ENCODE measurements at regions of chr14 and their contacts with region 1.

Region 1: GRCh38 chr14:51094901-51095853 is at the start of gene TRIM9:
- DNase-seq: peak; percentile 75 to 96 (median 91)
- ATAC-seq: peak; percentile 94
- H3K4me3 ChIP-seq: peak within 1 kb of the TSS; percentile 72 to 81
- H3K4me3 Mint-ChIP-seq: peak within 1 kb of the TSS; percentile 93
- H3K27ac ChIP-seq: peak within 1 kb of the TSS; percentile 26 to 52
- H3K27ac Mint-ChIP-seq: peak within 1 kb of the TSS; percentile 81
- H3K4me1 ChIP-seq: peaks cover 17% of the 10 kb centered on the region
- H3K4me1 Mint-ChIP-seq: peaks cover 18% of the 10 kb centered on the region
- H3K27me3 ChIP-seq: peaks cover 0 to 10% of the 10 kb centered on the region in 2 experiments
- H3K27me3 Mint-ChIP-seq: peaks cover 3% of the 10 kb centered on the region
- CTCF ChIP-seq: no peak
- total RNA-seq, gene TRIM9: 0.57 to 0.64 TPM

Region 2: DNA sequence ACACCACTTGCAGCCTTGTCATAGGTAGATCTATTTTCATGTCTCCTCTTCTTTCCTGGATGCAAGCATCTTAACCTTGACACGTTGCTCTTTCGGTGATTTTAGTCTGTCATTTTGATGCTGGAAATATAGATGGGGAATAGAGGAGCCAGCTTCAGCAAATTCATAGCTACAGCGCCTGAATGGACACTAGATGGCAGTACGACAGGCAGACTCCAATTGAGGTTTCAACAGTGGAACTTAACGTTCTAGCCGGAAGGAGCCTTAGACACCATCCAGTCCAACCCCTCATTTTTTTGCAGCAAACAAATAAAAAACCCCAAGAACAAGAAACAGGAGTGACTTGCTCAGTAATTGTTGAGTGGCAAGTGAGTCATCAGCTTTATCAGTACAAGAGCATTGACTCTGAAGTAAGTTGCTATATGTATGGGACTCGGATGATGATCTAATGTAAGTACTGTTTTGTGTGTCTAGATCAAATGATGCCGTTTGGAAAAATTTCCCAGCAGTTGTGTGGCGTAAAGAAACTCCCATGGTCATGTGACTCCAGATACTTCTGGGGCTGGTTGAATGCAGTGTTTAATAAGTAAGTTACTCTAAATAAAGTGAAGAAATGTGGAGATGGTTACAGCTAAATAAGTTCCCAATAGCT is 774.0 kb before region 1 on chr14:
- CTCF ChIA-PET with region 1: no interaction called
- POLR2A ChIA-PET with region 1: no interaction called
- intact Hi-C with region 1: loop called (anchors 5 kb)
- DNase-seq: peak; percentile 29 to 93 (median 68)
- ATAC-seq: peak; percentile 95
- H3K4me3 ChIP-seq: no peak overlapping the region
- H3K4me3 Mint-ChIP-seq: no peak overlapping the region
- H3K27ac ChIP-seq: peak overlapping the region; percentile 10 to 59
- H3K27ac Mint-ChIP-seq: no peak overlapping the region
- H3K4me1 ChIP-seq: peaks cover 7% of the 10 kb centered on the region
- H3K4me1 Mint-ChIP-seq: peaks cover 21% of the 10 kb centered on the region
- H3K27me3 ChIP-seq: no peaks in the 10 kb centered on the region
- H3K27me3 Mint-ChIP-seq: no peaks in the 10 kb centered on the region
- CTCF ChIP-seq: peak; percentile 88

Region 3: DNA sequence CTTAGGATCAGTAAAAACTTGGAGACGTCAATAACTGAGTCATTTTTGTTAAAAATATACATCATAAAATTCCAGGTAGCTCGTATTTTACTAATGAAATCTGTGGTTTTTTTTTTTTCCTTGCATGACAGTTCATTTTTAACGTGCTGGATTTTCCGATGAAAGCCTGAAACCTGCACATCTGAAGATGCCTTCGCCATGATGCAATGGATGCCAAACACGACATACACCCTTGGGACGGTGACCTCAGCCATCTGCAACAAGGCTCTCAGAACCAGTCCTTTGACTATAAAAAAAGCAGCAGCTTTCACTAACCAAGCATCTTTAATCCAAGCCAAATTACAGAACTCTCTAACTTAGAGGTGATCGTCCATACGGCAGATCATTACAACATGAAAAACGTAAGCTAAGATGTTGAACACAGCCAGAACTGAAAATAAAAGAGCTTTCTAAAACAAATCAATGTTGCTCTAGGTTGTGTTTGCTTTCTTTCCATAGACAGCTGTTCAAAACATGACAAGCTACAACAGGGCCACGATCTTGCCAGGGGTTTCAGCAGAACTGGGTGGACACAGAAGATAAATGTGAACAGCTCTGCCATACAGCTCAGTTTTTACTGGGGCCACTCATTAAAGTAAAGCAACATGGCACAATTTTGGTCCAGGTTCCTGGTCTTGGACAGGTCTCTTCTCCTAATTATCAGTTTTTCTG is 272.0 kb before region 1 on chr14:
- CTCF ChIA-PET with region 1: no interaction called
- POLR2A ChIA-PET with region 1: no interaction called
- intact Hi-C with region 1: loop called in 1 of 2 experiments (anchors 10 kb)
- DNase-seq: peak in 2 of 9 experiments; percentile 13 to 36
- ATAC-seq: no peak
- H3K4me3 ChIP-seq: peak overlapping the region; percentile 21 to 28
- H3K4me3 Mint-ChIP-seq: peak overlapping the region; percentile 79
- H3K27ac ChIP-seq: peak overlapping the region; percentile 54 to 64
- H3K27ac Mint-ChIP-seq: peak overlapping the region; percentile 98
- H3K4me1 ChIP-seq: peaks cover 93% of the 10 kb centered on the region
- H3K4me1 Mint-ChIP-seq: peaks cover 91% of the 10 kb centered on the region
- H3K27me3 ChIP-seq: no peaks in the 10 kb centered on the region
- H3K27me3 Mint-ChIP-seq: no peaks in the 10 kb centered on the region
- CTCF ChIP-seq: no peak

Region 4: DNA sequence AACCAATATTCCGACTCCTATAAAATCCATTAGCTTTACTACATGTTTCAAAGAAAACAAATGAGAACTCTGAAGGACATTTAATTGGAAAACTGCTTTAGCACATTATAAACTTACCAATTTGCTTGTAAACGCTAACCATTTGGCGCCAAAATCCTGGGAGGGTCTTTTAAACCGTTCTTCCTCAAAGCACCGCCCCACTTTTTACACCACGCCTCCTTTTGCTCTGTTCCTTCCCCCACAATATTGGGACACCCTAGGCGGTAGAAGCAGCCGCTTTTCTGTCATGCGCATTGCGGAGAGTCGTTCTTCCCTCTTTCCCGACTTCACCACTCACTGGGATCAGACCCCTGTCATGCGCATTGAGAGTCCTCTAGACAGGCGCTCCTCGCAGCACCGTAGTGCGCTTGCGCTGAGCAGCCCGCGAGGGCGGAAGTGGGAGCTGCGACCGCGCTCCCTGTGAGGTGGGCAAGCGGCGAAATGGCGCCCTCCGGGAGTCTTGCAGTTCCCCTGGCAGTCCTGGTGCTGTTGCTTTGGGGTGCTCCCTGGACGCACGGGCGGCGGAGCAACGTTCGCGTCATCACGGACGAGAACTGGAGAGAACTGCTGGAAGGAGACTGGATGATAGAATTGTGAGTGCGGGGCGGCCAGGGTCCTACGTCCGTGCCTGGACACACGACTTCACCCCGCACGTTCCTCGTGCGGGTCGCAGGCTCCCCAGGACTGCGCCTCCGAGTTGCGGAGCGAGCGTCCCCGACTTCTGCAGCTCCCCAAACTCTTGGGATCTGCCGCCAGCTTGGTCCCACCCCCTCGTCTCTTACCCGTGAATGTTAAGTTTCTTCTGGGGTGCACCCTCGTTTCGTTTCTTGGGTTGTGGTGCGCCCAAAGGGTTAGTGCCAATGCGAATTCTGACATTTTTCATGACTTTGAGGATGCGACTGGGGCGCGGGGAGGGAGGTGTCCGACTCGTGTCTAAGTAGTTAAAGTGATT is 144.9 kb after region 1 on chr14 and contains the start of gene TMX1:
- CTCF ChIA-PET with region 1: interaction called, 3 read pairs
- POLR2A ChIA-PET with region 1: interaction called, 3 read pairs
- intact Hi-C with region 1: loop called (anchors 1 to 2 kb)
- DNase-seq: peak; percentile 58 to 94 (median 85)
- ATAC-seq: peak; percentile 93
- H3K4me3 ChIP-seq: peak within 1 kb of the TSS; percentile 76 to 95
- H3K4me3 Mint-ChIP-seq: no peak within 1 kb of the TSS
- H3K27ac ChIP-seq: peak within 1 kb of the TSS; percentile 57 to 77
- H3K27ac Mint-ChIP-seq: no peak within 1 kb of the TSS
- H3K4me1 ChIP-seq: peaks cover 30% of the 10 kb centered on the region
- H3K4me1 Mint-ChIP-seq: peaks cover 24% of the 10 kb centered on the region
- H3K27me3 ChIP-seq: no peaks in the 10 kb centered on the region
- H3K27me3 Mint-ChIP-seq: no peaks in the 10 kb centered on the region
- CTCF ChIP-seq: no peak
- total RNA-seq, gene TMX1: 10.2 to 11.1 TPM

Region 5: DNA sequence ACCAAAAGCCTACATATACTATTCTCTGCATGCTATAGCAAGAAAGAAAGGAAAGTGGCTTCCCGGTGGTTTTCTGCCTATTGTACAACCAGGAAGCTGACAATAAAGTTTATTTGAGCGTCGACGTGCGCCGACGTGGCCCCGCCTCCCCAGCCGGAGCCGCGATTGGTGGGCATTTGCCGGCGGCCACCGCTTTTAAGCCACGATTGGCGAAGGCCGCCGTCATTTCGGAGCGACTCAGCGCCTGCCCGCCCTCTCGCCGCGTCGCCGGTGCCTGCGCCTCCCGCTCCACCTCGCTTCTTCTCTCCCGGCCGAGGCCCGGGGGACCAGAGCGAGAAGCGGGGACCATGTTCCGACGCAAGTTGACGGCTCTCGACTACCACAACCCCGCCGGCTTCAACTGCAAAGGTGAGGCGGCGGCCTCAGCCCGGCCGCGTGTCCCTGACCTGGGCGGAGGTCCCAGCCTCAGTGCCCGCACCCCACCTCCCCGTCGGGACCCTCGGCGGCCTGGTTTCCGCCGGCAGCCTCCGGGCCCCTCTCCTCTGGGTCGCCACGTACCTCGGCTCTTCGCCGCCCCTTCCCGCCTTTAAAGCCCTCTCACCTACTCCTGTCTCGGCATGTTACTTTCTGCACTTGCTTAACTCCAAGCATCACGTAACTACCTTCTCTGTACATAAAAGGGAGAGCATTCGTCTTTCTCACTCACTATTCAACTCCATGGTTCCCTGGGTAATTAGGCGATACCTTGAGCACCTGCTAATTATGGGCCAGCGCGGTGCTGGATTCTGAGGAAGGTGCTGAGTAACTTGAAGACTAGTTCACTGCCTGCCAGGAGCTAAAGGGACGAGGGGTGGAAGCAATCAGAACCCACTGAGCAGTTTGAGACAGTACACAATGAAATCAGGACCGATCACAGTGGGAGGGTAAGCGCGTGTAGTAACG is 894.4 kb after region 1 on chr14 and contains the start of gene RTRAF:
- CTCF ChIA-PET with region 1: no interaction called
- POLR2A ChIA-PET with region 1: no interaction called
- intact Hi-C with region 1: loop called (anchors 2 to 10 kb)
- DNase-seq: peak; percentile 77 to 97 (median 91)
- ATAC-seq: peak; percentile 96
- H3K4me3 ChIP-seq: peak within 1 kb of the TSS; percentile 65 to 84
- H3K4me3 Mint-ChIP-seq: peak within 1 kb of the TSS; percentile 94
- H3K27ac ChIP-seq: peak within 1 kb of the TSS; percentile 84 to 85
- H3K27ac Mint-ChIP-seq: peak within 1 kb of the TSS; percentile 94
- H3K4me1 ChIP-seq: peaks cover 15% of the 10 kb centered on the region
- H3K4me1 Mint-ChIP-seq: peaks cover 46% of the 10 kb centered on the region
- H3K27me3 ChIP-seq: no peaks in the 10 kb centered on the region
- H3K27me3 Mint-ChIP-seq: no peaks in the 10 kb centered on the region
- CTCF ChIP-seq: no peak
- total RNA-seq, gene RTRAF: 155 to 161 TPM

Measured in CD8-positive, alpha-beta T cell (primary cell).